Mucosa of descending colon (tissue), 3 donors: ENCODE measurements at regions of chr1 and their contacts with region 1.

Region 1: GRCh38 chr1:53999920-54000319 is 18.1 kb downstream of the LDLRAD1 start:
- DNase-seq: no peak
- ATAC-seq: no peak
- H3K4me3 ChIP-seq: no peak overlapping the region
- H3K4me1 ChIP-seq: no peaks in the 10 kb centered on the region
- CTCF ChIP-seq: no peak

Region 2: GRCh38 chr1:53393325-53393792 is 606.6 kb before region 1 on chr1:
- intact Hi-C with region 1: no loop called
- DNase-seq: peak; percentile 67 to 86 (median 76)
- ATAC-seq: peak; percentile 88
- H3K4me3 ChIP-seq: no peak overlapping the region
- H3K4me1 ChIP-seq: no peaks in the 10 kb centered on the region
- CTCF ChIP-seq: peak; percentile 81

Region 3: DNA sequence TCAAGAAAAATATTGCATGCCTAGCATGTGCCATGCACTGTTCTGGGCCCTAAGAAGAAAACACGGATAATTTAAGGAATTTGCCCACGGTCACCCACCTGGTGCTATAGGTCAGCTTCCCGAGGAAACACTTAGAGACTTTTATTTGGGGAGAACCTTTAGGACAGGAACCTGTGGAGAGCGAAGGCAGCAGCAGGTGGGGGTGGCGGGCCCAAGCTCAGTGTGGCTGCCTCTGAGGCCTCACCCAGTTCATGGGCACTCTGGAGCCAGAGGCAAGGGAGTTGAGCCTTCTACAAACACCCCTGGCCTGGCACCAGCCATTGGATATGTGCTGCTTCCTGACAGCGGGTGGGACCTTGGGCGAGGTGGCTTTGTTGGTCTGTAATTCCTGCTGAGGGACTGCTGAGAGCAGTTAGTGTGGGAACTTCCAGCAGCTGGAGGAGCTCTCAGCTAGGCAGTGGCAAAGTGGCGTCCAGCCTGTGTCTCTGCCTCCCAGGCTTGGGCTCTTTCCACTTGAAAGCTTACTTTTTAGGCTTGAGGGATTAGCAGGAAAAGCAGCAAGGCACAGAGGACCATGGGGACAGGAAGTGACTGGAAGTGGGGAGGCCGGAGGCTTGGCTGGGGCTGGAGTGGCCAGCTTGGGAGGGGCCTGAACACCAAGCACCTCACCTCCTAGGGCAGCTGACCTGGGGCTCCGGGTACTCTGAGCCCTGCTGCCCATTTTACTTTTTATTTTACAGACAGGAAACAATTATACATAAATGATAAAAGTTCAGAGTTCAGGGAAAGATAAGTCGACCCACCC is 219.2 kb after region 1 on chr1:
- intact Hi-C with region 1: loop called in 1 of 2 experiments (anchors 5 kb)
- DNase-seq: peak in 2 of 3 donors; percentile 51 to 52
- ATAC-seq: peak; percentile 55
- H3K4me3 ChIP-seq: no peak overlapping the region
- H3K4me1 ChIP-seq: peaks cover 12% of the 10 kb centered on the region
- CTCF ChIP-seq: no peak